Activated CD8-positive, alpha-beta memory T cell treated with anti-CD3 and anti-CD28 coated beads, Interleukin-2, amount 10 ng/mL, durations not matched to agents 7 days and 5 days (primary cell): ENCODE measurements at regions of chr7 and their contacts with region 1.

Region 1: GRCh38 chr7:154927624-154928143 is 75.2 kb downstream of the PAXIP1 start:
- DNase-seq: peak; percentile 89
- ATAC-seq: peak; percentile 62
- H3K4me3 Mint-ChIP-seq: peak overlapping the region; percentile 94
- H3K27ac Mint-ChIP-seq: peak overlapping the region; percentile 86
- H3K4me1 Mint-ChIP-seq: peaks cover 12% of the 10 kb centered on the region
- H3K27me3 Mint-ChIP-seq: peaks cover 19% of the 10 kb centered on the region

Region 2: DNA sequence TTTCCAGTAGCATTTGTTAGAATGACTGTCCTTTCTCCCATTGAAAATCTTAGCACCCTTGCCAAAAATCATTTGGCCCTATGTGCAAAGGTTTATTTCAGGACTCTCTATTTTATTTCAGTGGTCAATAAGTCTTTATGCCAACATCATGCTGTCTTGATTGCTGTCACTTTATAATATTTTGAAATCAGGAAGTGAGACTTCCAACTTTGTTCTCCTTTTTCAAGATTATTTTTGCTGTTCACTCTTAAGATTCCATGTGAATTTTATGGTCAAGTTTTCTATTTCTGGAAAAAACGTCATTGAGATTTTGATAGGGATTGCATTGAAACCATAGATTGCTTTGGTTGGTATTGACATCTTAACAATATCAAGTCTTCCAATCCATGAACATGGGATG is 10.2 kb after region 1 on chr7:
- CTCF ChIA-PET with region 1: interaction called, 10 read pairs
- DNase-seq: no peak
- ATAC-seq: no peak
- H3K4me3 Mint-ChIP-seq: no peak overlapping the region
- H3K27ac Mint-ChIP-seq: no peak overlapping the region
- H3K4me1 Mint-ChIP-seq: no peaks in the 10 kb centered on the region
- H3K27me3 Mint-ChIP-seq: no peaks in the 10 kb centered on the region

Region 3: DNA sequence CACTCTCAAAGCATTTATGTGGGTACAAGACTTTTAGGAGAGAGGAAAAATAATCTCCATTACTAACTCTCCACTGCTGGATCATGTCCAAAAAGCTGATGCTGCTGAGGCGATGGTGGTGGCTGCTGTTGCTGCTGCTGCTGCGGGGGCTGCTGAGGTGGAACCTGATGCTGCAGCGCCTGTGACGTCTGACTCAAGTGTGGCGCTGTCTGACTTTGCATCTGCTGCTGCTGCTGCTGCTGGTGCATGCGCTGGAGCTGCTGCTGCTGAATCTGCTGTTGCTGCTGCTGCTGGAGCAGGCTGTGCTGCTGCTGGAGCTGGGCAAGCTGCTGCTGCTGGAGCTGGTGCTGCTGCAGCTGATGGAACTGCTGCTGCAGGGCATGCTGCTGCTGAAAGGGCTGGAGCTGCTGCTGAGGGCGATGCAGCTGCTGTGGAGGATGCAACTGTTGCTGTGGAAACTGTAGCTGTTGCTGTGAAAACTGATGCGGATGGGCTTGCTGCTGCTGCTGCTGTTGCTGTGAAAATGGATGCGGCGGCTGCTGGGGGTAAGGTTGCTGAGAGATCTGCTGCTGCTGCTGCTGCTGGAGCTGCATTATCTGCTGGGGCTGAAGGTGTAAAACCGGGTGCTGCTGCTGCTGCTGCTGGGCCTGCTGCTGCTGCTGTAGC is 40.8 kb after region 1 on chr7:
- CTCF ChIA-PET with region 1: interaction called, 11 read pairs
- DNase-seq: peak; percentile 48
- ATAC-seq: peak; percentile 56
- H3K4me3 Mint-ChIP-seq: peak overlapping the region; percentile 8
- H3K27ac Mint-ChIP-seq: peak overlapping the region; percentile 61
- H3K4me1 Mint-ChIP-seq: peaks cover 35% of the 10 kb centered on the region
- H3K27me3 Mint-ChIP-seq: no peaks in the 10 kb centered on the region

Region 4: GRCh38 chr7:155009570-155010157 is 82.0 kb after region 1 on chr7:
- CTCF ChIA-PET with region 1: interaction called, 20 read pairs
- DNase-seq: peak; percentile 45
- ATAC-seq: peak; percentile 52
- H3K4me3 Mint-ChIP-seq: no peak overlapping the region
- H3K27ac Mint-ChIP-seq: no peak overlapping the region
- H3K4me1 Mint-ChIP-seq: peaks cover 5% of the 10 kb centered on the region
- H3K27me3 Mint-ChIP-seq: peaks cover 10% of the 10 kb centered on the region

Region 5: GRCh38 chr7:155298834-155299534 is 371.3 kb after region 1 on chr7:
- CTCF ChIA-PET with region 1: interaction called, 15 read pairs
- DNase-seq: peak; percentile 99
- ATAC-seq: peak; percentile 72
- H3K4me3 Mint-ChIP-seq: peak overlapping the region; percentile 88
- H3K27ac Mint-ChIP-seq: peak overlapping the region; percentile 97
- H3K4me1 Mint-ChIP-seq: peaks cover 61% of the 10 kb centered on the region
- H3K27me3 Mint-ChIP-seq: no peaks in the 10 kb centered on the region

Region 6: DNA sequence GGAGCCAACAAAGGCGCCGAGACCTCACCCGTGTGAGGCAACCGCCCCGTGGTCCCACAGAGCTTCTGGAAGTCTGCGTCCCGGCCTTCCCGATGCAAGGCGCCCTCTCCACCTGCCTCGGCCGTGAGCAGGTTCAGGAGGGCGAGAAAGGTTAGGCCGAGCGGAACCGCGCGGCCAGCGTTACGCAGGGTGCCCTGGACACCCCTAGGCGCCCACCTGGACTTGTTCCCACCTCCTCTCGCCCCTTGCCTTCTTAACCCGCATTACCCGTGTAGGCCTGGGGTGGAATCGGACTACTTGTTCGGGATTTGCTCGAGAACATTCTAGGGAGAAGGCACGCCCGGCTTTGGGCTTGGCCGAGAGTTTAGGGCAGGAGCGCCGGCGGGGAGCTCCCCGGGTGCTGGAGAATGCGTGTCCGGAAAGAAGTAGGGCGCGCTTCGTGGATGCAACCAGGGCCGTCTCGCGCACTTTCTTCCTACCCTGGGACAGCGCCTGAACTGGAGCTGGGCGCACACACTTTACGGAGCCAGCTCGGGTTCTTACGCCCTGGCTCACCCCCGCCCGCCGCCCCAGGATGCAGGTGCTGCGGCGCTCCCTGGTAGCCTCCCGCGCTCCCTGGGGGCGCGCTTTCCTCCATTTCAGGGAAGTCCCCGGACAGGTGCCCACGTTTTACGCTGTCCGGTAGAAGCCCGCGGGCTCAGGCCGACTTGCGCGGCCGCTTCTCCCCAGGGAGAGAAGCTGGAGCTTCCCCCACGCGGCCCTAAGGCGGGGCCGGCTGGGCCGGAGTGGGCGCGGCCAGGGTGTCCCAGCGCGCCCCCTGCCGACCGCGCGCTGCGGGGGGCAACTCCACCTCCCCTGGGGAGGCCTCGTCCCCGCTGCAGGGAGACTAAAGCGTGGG is 444.4 kb after region 1 on chr7:
- CTCF ChIA-PET with region 1: interaction called, 12 read pairs
- DNase-seq: no peak
- ATAC-seq: peak; percentile 65
- H3K4me3 Mint-ChIP-seq: no peak overlapping the region
- H3K27ac Mint-ChIP-seq: peak overlapping the region; percentile 40
- H3K4me1 Mint-ChIP-seq: peaks cover 28% of the 10 kb centered on the region
- H3K27me3 Mint-ChIP-seq: peaks cover 73% of the 10 kb centered on the region